ENCODE measurements at regions of chr16 and their contacts with region 1.

Region 1: GRCh38 chr16:84294531-84295142 is at the start of gene WFDC1:
- DNase-seq: peak in 1 of 2 experiments; percentile 58
- H3K4me3 ChIP-seq: no peak within 1 kb of the TSS
- H3K27ac ChIP-seq: no peak within 1 kb of the TSS
- H3K4me1 ChIP-seq: peaks cover 4 to 29% (median 19%) of the 10 kb centered on the region in 4 experiments
- H3K27me3 ChIP-seq: no peaks in the 10 kb centered on the region; a peak in 1 of 7 replicates
- CTCF ChIP-seq: no peak
- EP300 ChIP-seq: no peak
- POLR2A ChIP-seq: no peak
- RAD21 ChIP-seq: no peak
- total RNA-seq, gene WFDC1: 1.1 and 1.6 TPM in 2 replicates

Region 2: GRCh38 chr16:84308120-84308519 is 13.5 kb after region 1 on chr16:
- CTCF ChIA-PET with region 1: interaction called, 14 read pairs
- POLR2A ChIA-PET with region 1: interaction called, 3 read pairs
- DNase-seq: peak in 1 of 2 experiments; percentile 86
- H3K4me3 ChIP-seq: no peak overlapping the region
- H3K27ac ChIP-seq: no peak overlapping the region
- H3K4me1 ChIP-seq: peaks cover 0 to 3% (median 0%) of the 10 kb centered on the region in 4 experiments; a peak in 2 of 7 replicates
- H3K27me3 ChIP-seq: no peaks in the 10 kb centered on the region
- CTCF ChIP-seq: peak; percentile 83 to 92 (median 85)
- EP300 ChIP-seq: no peak
- POLR2A ChIP-seq: no peak
- RAD21 ChIP-seq: peak; percentile 91 to 98